ENCODE measurements at regions of chr19 and their contacts with region 1.

Region 1: GRCh38 chr19:4811328-4812131 is 20.0 kb downstream of the TICAM1 start:
- DNase-seq: peak; percentile 45
- ATAC-seq: peak; percentile 33
- H3K4me3 ChIP-seq: no peak overlapping the region
- H3K27ac ChIP-seq: peak overlapping the region; percentile 11
- H3K4me1 ChIP-seq: peaks cover 2% of the 10 kb centered on the region; the same call in 1 of the 2 replicates
- H3K27me3 ChIP-seq: no peaks in the 10 kb centered on the region
- CTCF ChIP-seq: peak; percentile 71
- POLR2A ChIP-seq: no peak
- RAD21 ChIP-seq: peak; percentile 53

Region 2: DNA sequence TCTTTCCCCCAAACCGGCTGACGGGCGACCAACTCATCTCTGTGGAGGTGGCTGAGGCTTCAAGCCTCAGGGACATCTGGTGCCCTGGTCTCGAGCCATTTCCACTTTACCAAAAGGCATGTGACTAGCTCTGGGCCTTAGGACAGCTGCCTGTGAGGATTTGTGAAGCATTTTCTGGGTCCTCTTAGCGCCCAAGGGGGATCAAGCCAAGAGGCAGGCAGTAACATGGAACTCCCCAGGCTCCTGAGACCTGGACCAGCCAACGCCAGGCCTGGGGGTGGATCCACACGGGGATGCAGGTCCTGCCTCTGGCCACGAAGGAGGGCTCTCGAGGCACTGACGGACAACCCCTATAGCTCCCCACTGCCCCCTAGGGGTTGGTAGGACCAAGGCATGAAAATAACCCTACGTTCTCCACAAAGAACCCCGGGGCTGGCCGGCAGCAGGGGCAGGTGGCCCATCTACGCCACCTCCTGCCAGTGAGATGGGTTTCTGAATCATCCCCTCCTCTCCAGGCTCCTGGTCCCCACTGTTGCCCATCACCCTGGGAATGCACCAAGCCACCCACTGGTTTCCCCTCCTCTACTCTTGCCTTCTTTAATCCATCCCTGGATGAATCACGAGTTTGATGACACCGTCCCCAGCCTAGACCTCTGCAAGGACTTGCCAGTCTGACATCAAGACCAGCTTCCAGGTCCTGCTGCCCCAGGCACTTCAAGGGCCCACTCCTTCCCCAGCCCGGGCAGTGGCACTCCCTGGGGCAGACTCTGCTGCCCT is 134.4 kb before region 1 on chr19:
- CTCF ChIA-PET with region 1: no interaction called
- POLR2A ChIA-PET with region 1: no interaction called
- dilution Hi-C with region 1: no loop called
- in situ Hi-C with region 1: no loop called
- intact Hi-C with region 1: no loop called
- DNase-seq: peak; percentile 35
- ATAC-seq: peak; percentile 37; the same call in 1 of the 2 replicates
- H3K4me3 ChIP-seq: no peak overlapping the region
- H3K27ac ChIP-seq: no peak overlapping the region
- H3K4me1 ChIP-seq: no peaks in the 10 kb centered on the region
- H3K27me3 ChIP-seq: no peaks in the 10 kb centered on the region
- CTCF ChIP-seq: peak; percentile 39
- POLR2A ChIP-seq: no peak
- RAD21 ChIP-seq: no peak

Region 3: DNA sequence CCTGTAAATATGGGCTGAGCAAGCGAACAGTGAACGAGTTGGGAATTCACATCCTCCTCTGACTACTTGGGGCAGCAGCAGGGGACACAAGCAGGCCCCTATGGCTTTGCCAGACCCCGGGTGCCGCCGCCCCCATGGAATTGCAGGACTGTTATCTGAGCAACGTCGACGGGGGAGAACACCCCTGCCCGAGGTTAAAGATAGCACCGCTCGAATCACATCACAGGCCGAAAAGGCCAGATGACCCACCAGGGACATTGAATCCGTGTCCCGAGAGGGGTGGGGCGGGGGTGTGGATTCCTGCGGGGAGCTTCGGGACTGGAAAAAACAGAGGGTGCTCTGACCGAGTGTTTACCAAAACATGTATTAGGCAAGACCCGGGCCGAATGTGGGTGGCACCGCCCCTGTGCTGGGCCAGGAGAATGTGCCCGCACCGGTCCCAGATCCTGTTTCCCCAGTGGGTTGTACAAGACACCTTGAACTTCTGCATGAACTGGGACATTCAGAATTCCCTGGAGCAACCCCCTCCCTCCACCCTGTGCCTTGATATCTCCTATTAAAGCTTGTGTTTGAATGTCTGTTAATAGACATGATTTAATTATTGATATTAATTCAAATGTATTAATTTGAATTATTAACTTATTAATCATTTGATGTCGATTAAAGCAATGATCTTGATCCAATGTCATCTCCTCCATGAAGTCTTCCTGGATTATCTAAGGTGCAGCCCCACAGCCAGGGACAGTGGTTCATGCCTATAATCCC is 10.8 kb before region 1 on chr19:
- CTCF ChIA-PET with region 1: no interaction called
- POLR2A ChIA-PET with region 1: no interaction called
- dilution Hi-C with region 1: no loop called
- in situ Hi-C with region 1: no loop called
- intact Hi-C with region 1: no loop called
- DNase-seq: no peak
- ATAC-seq: no peak
- H3K4me3 ChIP-seq: no peak overlapping the region
- H3K27ac ChIP-seq: no peak overlapping the region
- H3K4me1 ChIP-seq: no peaks in the 10 kb centered on the region
- H3K27me3 ChIP-seq: no peaks in the 10 kb centered on the region
- CTCF ChIP-seq: no peak
- POLR2A ChIP-seq: no peak
- RAD21 ChIP-seq: no peak

Region 4: DNA sequence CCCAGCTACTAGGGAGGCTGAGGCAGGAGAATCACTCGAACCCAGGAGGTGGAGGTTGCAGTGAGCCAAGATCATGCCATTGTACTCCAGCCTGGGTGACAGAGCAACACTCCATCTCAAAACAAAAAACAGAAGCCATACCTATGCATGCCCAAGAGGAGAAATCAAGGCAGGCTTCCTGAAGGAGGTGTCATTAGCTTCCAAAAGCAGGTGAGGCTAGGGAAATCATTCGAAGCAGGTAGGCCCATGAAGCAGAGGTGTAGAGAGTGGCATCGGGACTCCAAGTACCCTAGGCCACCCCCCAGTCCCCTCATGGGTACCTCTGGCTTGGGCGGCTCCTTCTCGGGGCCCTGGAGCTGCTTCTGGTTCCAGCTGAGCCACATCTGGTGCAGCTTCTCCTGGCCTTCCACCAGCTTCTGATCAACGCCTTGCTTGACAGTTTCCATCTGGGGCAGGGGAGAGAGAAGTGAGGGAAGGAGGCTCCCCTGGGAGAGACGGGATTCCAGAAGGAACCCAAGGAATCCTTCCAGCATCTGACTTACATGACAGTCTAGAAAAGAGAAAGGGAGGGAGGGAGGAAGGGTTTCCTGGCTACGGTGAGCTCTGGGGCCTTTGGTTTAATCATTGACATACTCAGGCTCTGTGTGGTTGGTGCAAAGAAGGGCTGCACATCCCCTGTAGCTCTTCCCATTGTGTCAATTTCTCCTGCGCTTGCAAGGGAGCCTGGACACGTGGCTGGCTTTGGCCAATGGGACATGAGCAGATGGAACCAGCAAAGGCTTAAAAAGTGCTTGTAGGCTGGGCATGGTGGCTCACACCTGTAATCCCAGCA is 33.0 kb after region 1 on chr19:
- CTCF ChIA-PET with region 1: interaction called, 10 read pairs
- POLR2A ChIA-PET with region 1: no interaction called
- dilution Hi-C with region 1: no loop called
- in situ Hi-C with region 1: no loop called
- intact Hi-C with region 1: no loop called
- DNase-seq: peak; percentile 25
- ATAC-seq: no peak
- H3K4me3 ChIP-seq: no peak overlapping the region
- H3K27ac ChIP-seq: peak overlapping the region; percentile 12; the same call in 1 of the 2 replicates
- H3K4me1 ChIP-seq: peaks cover 6% of the 10 kb centered on the region
- H3K27me3 ChIP-seq: no peaks in the 10 kb centered on the region
- CTCF ChIP-seq: no peak
- POLR2A ChIP-seq: no peak
- RAD21 ChIP-seq: no peak

Region 5: DNA sequence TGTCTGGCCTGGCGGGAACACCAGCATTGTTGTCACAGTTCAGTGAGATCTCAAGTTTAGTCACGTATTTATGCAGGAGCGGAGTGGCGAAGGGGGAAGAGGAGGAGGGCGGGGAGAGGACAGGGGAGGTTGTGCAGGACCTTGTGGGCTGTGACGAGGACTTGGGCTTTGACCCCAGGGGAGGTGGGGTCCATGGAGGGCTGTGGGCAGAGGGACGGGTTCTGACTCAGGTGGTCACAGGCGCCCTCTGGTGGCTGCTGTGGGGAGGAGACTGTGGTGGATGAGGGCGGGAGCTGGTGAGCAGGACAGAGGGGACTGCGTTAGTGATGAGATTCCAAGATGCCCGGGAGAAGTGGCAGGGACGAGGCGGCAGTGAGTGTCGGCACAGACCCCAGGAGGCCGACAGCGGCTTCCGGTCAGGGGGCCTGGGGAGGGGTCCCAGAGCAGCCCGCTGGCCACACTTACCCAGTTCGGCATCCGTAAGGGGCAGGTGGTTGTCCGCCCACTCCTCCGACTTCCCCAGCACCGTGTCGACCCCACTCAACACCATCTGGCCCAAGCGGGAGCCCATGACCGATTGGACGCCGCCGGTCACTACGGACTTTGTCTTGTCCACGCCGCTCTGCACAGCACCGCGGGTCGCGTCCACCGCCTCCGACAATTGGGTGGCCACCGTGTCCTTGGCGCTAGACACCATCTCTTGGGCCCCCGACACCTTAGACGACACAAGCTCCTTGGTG is 40.2 kb after region 1 on chr19:
- CTCF ChIA-PET with region 1: interaction called, 22 read pairs
- POLR2A ChIA-PET with region 1: interaction called, 4 read pairs
- dilution Hi-C with region 1: no loop called
- in situ Hi-C with region 1: no loop called
- intact Hi-C with region 1: loop called (anchors 1 kb)
- DNase-seq: peak; percentile 42
- ATAC-seq: peak; percentile 88
- H3K4me3 ChIP-seq: no peak overlapping the region
- H3K27ac ChIP-seq: no peak overlapping the region
- H3K4me1 ChIP-seq: peaks cover 2% of the 10 kb centered on the region; the same call in 1 of the 2 replicates
- H3K27me3 ChIP-seq: no peaks in the 10 kb centered on the region
- CTCF ChIP-seq: peak; percentile 71
- POLR2A ChIP-seq: no peak
- RAD21 ChIP-seq: peak; percentile 66

Region 6: GRCh38 chr19:4909897-4910593 is 98.5 kb after region 1 on chr19:
- CTCF ChIA-PET with region 1: interaction called, 30 read pairs
- POLR2A ChIA-PET with region 1: interaction called, 8 read pairs
- dilution Hi-C with region 1: no loop called
- in situ Hi-C with region 1: loop called (anchors 5 kb)
- intact Hi-C with region 1: loop called (anchors 1 kb)
- DNase-seq: peak; percentile 79
- ATAC-seq: peak; percentile 79
- H3K4me3 ChIP-seq: peak overlapping the region; percentile 87
- H3K27ac ChIP-seq: peak overlapping the region; percentile 91
- H3K4me1 ChIP-seq: peaks cover 28% of the 10 kb centered on the region
- H3K27me3 ChIP-seq: no peaks in the 10 kb centered on the region
- CTCF ChIP-seq: no peak
- POLR2A ChIP-seq: no peak
- RAD21 ChIP-seq: no peak

Region 7: DNA sequence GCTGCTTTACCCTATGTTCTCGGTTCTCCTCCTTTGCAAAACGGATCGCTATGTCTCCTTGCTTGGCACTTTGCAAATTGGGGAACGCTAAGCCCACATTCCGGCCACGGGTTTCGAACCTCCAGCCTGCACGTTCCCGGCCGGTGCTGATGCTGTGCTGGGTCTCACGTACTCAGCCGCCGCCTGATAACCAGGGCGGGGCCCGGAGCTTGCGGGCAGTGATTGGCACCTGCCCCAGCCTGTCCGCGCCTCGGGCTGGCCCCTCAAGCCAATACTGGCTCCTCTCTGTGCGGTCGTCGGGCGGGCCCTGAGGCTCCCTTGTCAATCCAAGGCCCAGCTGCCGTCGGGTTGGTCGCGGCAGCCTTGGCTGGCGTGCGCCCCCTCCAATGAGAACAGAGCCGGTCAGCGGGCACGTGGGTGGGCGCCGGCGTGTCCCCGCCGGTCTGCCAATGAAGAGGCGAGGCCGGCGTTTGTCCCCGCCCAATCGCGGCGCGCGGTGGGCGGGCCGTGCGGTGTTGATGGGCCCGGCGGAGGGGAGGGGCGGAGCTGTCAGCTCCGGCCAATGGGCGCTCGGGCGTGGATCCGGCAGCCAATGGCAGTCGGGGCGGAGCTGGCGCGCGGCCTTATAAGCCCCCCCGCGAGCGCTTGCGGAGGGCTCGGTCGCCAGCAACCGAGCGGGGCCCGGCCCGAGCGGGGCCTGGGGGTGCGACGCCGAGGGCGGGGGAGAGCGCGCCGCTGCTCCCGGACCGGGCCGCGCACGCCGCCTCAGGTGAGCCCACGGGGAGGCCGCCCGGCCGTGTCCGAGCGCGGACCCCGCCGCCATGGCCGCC is 157.1 kb after region 1 on chr19 and contains the start of gene KDM4B:
- CTCF ChIA-PET with region 1: no interaction called
- POLR2A ChIA-PET with region 1: no interaction called
- dilution Hi-C with region 1: no loop called
- in situ Hi-C with region 1: no loop called
- intact Hi-C with region 1: loop called (anchors 1 kb)
- DNase-seq: peak; percentile 99
- ATAC-seq: peak; percentile 93
- H3K4me3 ChIP-seq: peak within 1 kb of the TSS; percentile 73
- H3K27ac ChIP-seq: peak within 1 kb of the TSS; percentile 90
- H3K4me1 ChIP-seq: peaks cover 20% of the 10 kb centered on the region
- H3K27me3 ChIP-seq: no peaks in the 10 kb centered on the region
- CTCF ChIP-seq: no peak
- POLR2A ChIP-seq: peak; percentile 99
- RAD21 ChIP-seq: no peak
- total RNA-seq, gene KDM4B: 5.0 TPM in 2 replicates